Activated CD4-positive, alpha-beta memory T cell treated with anti-CD3 and anti-CD28 coated beads for 36 hours (primary cell): ENCODE measurements at regions of chr2 and their contacts with region 1.

Region 1: DNA sequence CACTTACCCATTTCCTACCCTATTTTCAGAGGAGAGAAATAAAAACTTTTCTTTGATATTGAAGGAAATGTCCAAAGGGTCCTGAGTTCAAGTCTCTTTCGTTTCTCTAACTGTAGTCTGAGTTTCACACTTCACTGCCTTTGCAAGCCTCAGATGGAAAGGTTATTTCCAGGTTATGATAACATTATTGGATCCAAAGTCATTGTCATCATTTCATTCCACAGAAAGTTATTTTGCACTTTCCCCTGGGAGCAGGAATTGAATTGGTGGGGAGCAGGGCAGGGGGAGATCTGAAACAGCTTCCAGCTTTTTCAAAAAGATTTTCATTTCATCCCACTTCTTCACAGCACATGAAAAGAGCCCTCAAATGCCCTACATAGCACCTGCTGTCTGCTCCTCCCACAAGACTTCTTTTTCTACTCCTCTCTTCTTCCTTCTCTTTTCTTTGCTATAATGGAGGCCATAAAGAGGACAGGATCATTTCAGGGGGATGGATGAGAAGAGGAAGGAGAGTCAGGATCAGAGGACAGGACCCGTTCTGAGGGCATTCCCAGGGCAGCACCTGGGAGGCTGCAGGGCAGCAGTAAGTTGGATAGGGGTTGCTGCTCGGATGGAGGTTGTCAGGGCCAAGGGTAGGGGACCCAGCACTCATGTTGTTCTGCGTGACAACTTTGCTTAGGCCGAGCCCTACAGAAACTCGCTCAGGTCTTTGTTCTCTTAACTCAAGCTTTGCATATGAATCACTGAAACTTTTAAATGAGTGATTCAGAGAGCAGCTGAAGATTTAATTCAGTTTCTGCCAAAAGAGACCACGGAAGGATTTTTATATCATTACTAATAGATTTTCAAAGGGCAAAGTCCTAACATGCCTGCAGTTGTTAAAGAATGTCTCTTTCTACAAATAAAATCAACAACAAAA is 11.4 kb upstream of the GALNT5 start:
- DNase-seq: peak; percentile 64
- H3K4me3 Mint-ChIP-seq: no peak overlapping the region
- H3K27ac Mint-ChIP-seq: peak overlapping the region; percentile 51
- H3K4me1 Mint-ChIP-seq: peaks cover 15% of the 10 kb centered on the region
- H3K27me3 Mint-ChIP-seq: peaks cover 18% of the 10 kb centered on the region

Region 2: GRCh38 chr2:157032017-157032416 is 214.1 kb before region 1 on chr2:
- CTCF ChIA-PET with region 1: no interaction called
- POLR2A ChIA-PET with region 1: no interaction called
- intact Hi-C with region 1: no loop called
- DNase-seq: no peak
- H3K4me3 Mint-ChIP-seq: no peak overlapping the region
- H3K27ac Mint-ChIP-seq: no peak overlapping the region
- H3K4me1 Mint-ChIP-seq: no peaks in the 10 kb centered on the region
- H3K27me3 Mint-ChIP-seq: no peaks in the 10 kb centered on the region

Region 3: DNA sequence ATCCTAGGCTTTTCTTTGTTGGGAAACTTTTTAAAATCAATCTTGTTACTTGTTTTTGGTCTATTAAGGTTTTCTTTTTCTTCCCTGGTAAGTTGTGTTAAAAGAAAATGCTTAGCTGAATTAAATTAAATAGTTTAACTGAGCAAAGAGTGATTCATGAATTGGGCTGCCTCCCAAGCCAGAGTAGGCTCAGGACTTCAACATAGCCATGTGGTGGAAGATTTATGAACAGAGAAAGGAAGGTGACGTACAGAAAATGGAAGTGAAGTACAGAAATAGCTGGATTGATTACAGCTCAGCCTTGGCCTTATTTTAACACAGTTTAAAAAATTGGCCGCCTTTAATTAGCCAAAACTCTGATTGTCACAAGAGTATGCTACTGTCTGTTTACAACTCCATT is 16.5 kb before region 1 on chr2:
- CTCF ChIA-PET with region 1: no interaction called
- POLR2A ChIA-PET with region 1: no interaction called
- intact Hi-C with region 1: no loop called
- DNase-seq: no peak
- H3K4me3 Mint-ChIP-seq: no peak overlapping the region
- H3K27ac Mint-ChIP-seq: no peak overlapping the region
- H3K4me1 Mint-ChIP-seq: no peaks in the 10 kb centered on the region
- H3K27me3 Mint-ChIP-seq: peaks cover 11% of the 10 kb centered on the region

Region 4: GRCh38 chr2:157271590-157272203 is 25.6 kb after region 1 on chr2:
- CTCF ChIA-PET with region 1: no interaction called
- POLR2A ChIA-PET with region 1: no interaction called
- intact Hi-C with region 1: loop called (anchors 1 kb)
- DNase-seq: peak; percentile 38
- H3K4me3 Mint-ChIP-seq: no peak overlapping the region
- H3K27ac Mint-ChIP-seq: no peak overlapping the region
- H3K4me1 Mint-ChIP-seq: peaks cover 22% of the 10 kb centered on the region
- H3K27me3 Mint-ChIP-seq: peaks cover 2% of the 10 kb centered on the region

Region 5: GRCh38 chr2:157876066-157876787 is 630.1 kb after region 1 on chr2 and contains the start of gene ACVR1:
- CTCF ChIA-PET with region 1: no interaction called
- POLR2A ChIA-PET with region 1: no interaction called
- intact Hi-C with region 1: no loop called
- DNase-seq: peak; percentile 92
- H3K4me3 Mint-ChIP-seq: peak within 1 kb of the TSS; percentile 89
- H3K27ac Mint-ChIP-seq: peak within 1 kb of the TSS; percentile 88
- H3K4me1 Mint-ChIP-seq: peaks cover 56% of the 10 kb centered on the region
- H3K27me3 Mint-ChIP-seq: no peaks in the 10 kb centered on the region
- total RNA-seq, gene ACVR1: 24.8 to 25.0 TPM